Sigmoid colon (tissue), 7 donors: ENCODE measurements at regions of chr14 and their contacts with region 1.

Region 1: GRCh38 chr14:58072288-58073071 is 79.5 kb downstream of the ARMH4 start:
- DNase-seq: no peak
- H3K4me3 ChIP-seq: peak overlapping the region in 3 of 4 donors; percentile 12 to 23 (median 20)
- H3K27ac ChIP-seq: no peak overlapping the region
- H3K4me1 ChIP-seq: peaks cover 0 to 4% (median 1%) of the 10 kb centered on the region in 4 donors
- H3K27me3 ChIP-seq: no peaks in the 10 kb centered on the region
- CTCF ChIP-seq: peak; percentile 18 to 74 (median 44)
- EP300 ChIP-seq: no peak
- POLR2A ChIP-seq: no peak

Region 2: DNA sequence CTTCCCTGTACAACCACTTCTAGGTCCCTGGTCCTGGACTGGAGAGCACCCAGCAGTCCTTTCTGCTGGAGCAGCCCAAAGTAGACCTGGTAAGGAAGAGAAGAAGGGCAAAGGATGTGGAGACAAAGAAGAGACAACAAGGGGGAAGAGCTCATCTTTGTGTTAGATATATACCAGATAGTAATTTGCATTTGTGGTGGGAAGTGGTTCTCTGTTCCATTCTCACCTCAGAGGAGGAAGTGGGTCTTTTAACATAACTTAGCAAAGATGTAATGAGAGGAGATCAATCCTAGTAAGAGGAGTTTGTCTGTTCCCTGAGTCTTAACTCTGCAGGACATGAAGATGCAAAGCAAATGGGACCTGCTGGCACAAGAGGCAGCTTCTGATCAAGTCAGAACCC is 586.8 kb before region 1 on chr14:
- intact Hi-C with region 1: loop called (anchors 2 kb)
- DNase-seq: no peak
- H3K4me3 ChIP-seq: no peak overlapping the region
- H3K27ac ChIP-seq: no peak overlapping the region
- H3K4me1 ChIP-seq: no peaks in the 10 kb centered on the region
- H3K27me3 ChIP-seq: no peaks in the 10 kb centered on the region
- CTCF ChIP-seq: no peak
- EP300 ChIP-seq: no peak
- POLR2A ChIP-seq: no peak

Region 3: GRCh38 chr14:57686304-57686703 is 386.2 kb before region 1 on chr14:
- intact Hi-C with region 1: no loop called
- DNase-seq: no peak
- H3K4me3 ChIP-seq: no peak overlapping the region
- H3K27ac ChIP-seq: no peak overlapping the region
- H3K4me1 ChIP-seq: no peaks in the 10 kb centered on the region
- H3K27me3 ChIP-seq: no peaks in the 10 kb centered on the region
- CTCF ChIP-seq: no peak
- EP300 ChIP-seq: no peak
- POLR2A ChIP-seq: no peak